Heart left ventricle (tissue), 16 donors: ENCODE measurements at regions of chr10 and their contacts with region 1.

Region 1: GRCh38 chr10:79266543-79267312 is 80.5 kb upstream of the PPIF start:
- DNase-seq: peak; percentile 78 to 91 (median 83)
- ATAC-seq: peak; percentile 32 to 82 (median 66)
- H3K4me3 ChIP-seq: peak overlapping the region in 4 of 12 donors; percentile 1 to 21 (median 16)
- H3K27ac ChIP-seq: peak overlapping the region; percentile 25 to 95 (median 83)
- H3K4me1 ChIP-seq: peaks cover 28 to 100% (median 91%) of the 10 kb centered on the region in 12 donors
- H3K27me3 ChIP-seq: no peaks in the 10 kb centered on the region
- CTCF ChIP-seq: no peak
- POLR2A ChIP-seq: no peak

Region 2: DNA sequence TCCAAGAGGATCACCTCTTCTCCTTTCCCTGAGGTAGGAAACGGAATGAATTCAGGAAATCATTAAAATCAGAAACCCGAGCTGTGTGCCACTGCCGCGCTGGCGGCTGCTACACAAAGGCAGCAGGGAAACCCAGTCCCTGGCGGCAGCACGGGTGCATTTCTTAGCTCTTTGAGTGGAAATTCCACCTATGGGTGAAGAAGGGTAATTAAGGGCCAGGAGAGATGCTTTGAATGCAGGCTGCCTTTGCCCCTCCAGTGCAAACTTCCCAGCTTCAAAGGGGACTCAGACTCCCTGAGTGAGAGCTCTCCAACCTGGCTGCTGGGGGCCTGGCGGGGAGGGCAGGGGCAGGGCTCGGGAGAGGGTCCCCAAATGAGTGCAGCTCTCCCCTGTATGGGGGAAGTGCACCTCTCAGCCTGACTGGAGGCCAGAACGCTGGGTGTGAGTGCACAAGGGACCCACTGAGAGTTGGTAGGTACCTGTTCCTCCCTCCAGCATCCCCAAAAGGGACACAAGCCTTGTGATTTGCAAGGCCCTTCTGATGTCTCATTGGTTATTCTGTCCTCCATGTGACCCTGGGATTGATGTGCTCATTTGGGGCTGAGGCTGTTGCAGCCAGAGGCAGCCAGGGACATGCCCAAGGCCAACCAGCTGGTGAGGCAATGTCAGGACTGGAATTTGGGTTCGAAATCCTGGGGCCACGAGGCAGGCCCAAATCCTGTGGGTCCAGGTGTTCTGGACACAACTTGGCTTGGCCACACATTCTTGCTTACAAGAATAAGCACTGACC is 214.2 kb before region 1 on chr10:
- intact Hi-C with region 1: no loop called
- DNase-seq: peak in 2 of 5 donors; percentile 4 to 18
- ATAC-seq: no peak
- H3K4me3 ChIP-seq: no peak overlapping the region
- H3K27ac ChIP-seq: no peak overlapping the region
- H3K4me1 ChIP-seq: peaks cover 0 to 33% (median 9%) of the 10 kb centered on the region in 12 donors
- H3K27me3 ChIP-seq: no peaks in the 10 kb centered on the region
- CTCF ChIP-seq: no peak
- POLR2A ChIP-seq: no peak

Region 3: DNA sequence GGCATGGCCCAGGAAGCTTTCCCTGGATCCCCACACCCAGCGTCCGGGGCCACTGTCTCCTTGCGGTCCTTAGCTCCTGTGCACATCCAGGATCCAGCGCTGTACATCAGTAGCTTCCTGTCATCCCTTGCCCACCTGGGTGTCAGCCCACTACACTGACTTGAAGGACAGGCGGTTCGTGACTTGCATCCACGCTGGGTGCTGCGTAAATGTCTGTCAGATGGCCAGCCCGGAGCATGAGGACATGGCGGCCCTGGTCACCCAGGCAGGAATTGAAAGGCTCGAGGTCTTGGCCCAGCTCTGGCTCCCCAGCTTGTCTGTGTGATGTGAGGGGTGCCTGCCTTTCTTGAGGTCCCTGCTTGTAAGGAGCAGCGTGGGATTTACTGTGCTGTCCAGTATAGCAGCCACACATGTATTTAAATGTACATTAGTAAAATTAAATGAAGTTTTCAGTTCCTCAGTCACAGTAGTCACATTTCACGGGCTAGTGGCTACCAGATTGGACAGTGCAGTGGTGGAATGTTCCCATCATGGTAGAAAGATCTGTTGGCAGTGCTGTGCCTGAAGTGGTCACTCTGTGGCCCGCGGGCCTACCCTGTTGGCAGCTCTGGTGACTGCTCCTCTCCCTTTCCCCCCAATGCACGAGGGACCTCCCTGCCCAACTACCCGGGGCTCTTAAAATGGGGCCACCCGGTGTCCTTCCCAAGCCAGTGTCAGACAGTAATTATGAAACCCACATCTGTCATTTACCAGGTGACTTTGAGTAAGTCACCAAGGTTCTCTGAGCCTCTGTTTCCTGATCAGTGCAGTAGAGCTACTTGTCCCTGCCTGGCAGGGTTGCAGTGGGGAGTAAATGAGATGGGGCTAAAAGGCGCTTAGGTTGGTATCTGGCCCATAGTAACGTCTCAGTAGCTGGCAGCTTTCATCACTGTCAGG is 17.3 kb before region 1 on chr10:
- intact Hi-C with region 1: loop called in 2 of 10 experiments (anchors 2 kb)
- DNase-seq: no peak
- ATAC-seq: no peak
- H3K4me3 ChIP-seq: no peak overlapping the region
- H3K27ac ChIP-seq: peak overlapping the region in 9 of 12 donors; percentile 78 to 93 (median 88)
- H3K4me1 ChIP-seq: peaks cover 23 to 96% (median 83%) of the 10 kb centered on the region in 12 donors
- H3K27me3 ChIP-seq: no peaks in the 10 kb centered on the region
- CTCF ChIP-seq: no peak
- POLR2A ChIP-seq: no peak